ENCODE measurements at regions of chr17 and their contacts with region 1.

Region 1: DNA sequence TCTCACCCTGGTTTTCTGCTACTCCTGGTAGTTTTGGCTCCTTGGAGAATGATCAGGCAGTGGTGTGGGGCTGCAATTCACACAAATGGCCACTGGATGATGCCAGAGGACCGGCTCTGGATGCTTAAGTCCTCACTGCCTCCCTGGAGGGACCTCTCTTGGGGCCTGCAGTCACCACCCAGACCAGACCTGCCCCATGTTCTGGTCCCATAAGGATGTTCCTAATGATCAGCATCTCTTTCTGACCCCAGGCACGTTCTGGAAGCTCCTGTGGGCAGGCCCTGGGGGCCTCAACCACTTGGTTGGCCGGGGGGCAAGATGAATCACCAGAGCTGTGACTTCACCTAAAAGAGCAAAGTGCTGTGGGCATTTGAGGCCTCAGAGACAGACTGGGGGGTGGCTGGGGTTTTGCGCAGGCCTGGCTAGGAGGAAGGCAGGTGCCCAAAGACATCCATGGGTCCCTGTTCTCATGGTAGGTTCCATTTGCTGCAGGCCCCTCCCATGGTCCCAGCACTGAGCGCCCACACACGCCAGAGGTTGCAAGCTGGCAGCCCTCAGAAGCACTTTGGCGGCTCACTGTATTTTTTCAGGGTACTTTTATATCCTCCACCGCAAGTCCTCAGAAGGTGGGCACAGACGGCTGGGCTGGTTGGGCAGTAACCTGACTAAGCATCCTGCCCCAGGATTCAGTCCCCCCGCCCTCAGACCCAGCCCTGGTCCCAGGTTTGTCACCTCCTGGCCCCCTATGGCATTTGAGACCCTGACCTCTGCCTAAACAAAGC is 53.2 kb downstream of the NT5M start:
- DNase-seq: peak; percentile 81

Region 2: GRCh38 chr17:16922386-16923104 is 433.8 kb before region 1 on chr17:
- in situ Hi-C with region 1: no loop called
- DNase-seq: peak; percentile 23

Region 3: GRCh38 chr17:17258998-17259397 is 97.3 kb before region 1 on chr17:
- in situ Hi-C with region 1: no loop called
- DNase-seq: no peak

Region 4: GRCh38 chr17:17613708-17614114 is 257.4 kb after region 1 on chr17:
- in situ Hi-C with region 1: loop called (anchors 25 kb)
- DNase-seq: peak; percentile 61